Endothelial cell of umbilical vein (primary cell): ENCODE measurements at regions of chr1 and their contacts with region 1.

Region 1: DNA sequence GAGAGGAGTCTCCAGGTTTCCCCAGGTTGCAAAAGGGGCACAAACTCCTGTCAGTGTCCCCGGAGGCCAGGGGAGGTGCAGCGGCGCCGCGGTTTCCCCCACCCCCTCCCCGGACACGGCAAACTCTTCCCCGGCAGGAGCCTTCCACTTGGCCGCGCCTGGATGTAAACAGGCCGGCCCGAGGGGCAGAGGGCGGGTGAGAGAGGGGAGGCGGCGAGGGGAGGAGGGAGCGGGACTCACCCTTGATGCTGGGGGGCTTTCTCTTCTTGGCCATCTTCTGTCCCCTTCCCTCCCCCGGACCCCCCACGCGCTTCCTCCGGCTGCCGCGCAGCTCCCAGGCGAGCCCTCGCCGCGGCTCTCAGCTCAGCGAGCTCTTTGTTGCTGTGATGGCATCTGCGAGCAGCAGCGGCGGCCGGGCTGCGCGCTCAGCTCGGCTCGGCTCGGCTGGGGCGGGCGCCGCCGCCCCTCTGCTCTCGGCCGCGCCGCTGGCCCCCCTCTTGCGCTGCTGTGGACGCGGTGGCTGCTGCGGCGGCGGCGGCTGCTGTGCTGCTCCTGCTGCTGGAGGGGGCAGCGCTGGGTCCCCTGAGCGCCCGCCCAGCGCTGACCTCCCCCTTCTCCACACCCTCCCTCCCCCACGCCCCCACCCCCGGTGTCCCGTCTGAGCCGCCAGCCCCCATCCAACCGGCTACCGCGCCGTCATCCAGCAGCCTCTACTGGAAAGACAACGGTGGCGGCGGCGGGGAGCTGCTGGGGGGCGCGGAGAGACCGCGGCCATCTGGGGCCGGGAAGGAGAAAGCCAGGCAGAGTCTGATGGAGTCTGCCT is 4.9 kb upstream of the SLC44A5 start:
- DNase-seq: peak; percentile 74
- H3K4me3 ChIP-seq: peak overlapping the region; percentile 80 to 84 (median 82)
- H3K27ac ChIP-seq: no peak overlapping the region
- H3K4me1 ChIP-seq: peaks cover 12% of the 10 kb centered on the region
- H3K27me3 ChIP-seq: peaks cover 0 to 3% of the 10 kb centered on the region in 2 experiments
- CTCF ChIP-seq: no peak
- POLR2A ChIP-seq: no peak

Region 2: GRCh38 chr1:75539230-75540116 is 76.4 kb before region 1 on chr1:
- CTCF ChIA-PET with region 1: interaction called, 10 read pairs
- POLR2A ChIA-PET with region 1: no interaction called
- dilution Hi-C with region 1: no loop called
- intact Hi-C with region 1: loop called (anchors 5 kb)
- DNase-seq: peak; percentile 87
- H3K4me3 ChIP-seq: no peak overlapping the region
- H3K27ac ChIP-seq: no peak overlapping the region
- H3K4me1 ChIP-seq: peaks cover 29% of the 10 kb centered on the region
- H3K27me3 ChIP-seq: no peaks in the 10 kb centered on the region
- CTCF ChIP-seq: no peak
- POLR2A ChIP-seq: no peak

Region 3: GRCh38 chr1:75632350-75632949 is 16.6 kb after region 1 on chr1:
- CTCF ChIA-PET with region 1: interaction called, 96 read pairs
- POLR2A ChIA-PET with region 1: no interaction called
- dilution Hi-C with region 1: no loop called
- intact Hi-C with region 1: loop called (anchors 2 kb)
- DNase-seq: peak; percentile 70
- H3K4me3 ChIP-seq: no peak overlapping the region
- H3K27ac ChIP-seq: no peak overlapping the region
- H3K4me1 ChIP-seq: no peaks in the 10 kb centered on the region
- H3K27me3 ChIP-seq: no peaks in the 10 kb centered on the region
- CTCF ChIP-seq: peak; percentile 64 to 70
- POLR2A ChIP-seq: no peak